AG04449 (cell line): ENCODE measurements at regions of chr5 and their contacts with region 1.

Region 1: DNA sequence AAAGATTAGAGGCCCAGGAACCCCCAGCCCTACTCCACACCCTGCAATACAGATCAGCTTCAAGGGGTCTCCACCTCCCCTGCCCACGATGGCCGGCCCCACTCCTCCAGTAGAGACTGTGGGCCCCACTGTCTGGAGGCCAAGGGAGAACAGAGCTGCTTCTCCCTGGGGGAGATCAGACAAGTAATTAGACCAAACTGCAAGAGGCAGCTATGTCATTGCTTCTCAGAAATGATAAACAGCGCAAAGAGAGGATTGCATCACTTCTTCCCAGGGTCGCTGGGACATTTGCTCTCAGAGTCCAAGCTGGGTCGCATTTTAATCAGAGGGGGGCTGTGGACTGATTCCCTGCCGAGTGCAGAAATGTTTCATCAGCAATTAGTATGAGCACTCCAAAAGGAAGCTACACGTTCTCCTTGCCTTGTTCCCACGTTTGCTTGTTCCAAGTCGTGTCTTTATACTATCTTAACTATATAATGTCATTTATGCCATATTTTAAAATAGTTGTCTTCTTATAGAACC is 59.9 kb downstream of the ROPN1L start:
- DNase-seq: no peak
- H3K4me3 ChIP-seq: no peak overlapping the region
- CTCF ChIP-seq: no peak

Region 2: DNA sequence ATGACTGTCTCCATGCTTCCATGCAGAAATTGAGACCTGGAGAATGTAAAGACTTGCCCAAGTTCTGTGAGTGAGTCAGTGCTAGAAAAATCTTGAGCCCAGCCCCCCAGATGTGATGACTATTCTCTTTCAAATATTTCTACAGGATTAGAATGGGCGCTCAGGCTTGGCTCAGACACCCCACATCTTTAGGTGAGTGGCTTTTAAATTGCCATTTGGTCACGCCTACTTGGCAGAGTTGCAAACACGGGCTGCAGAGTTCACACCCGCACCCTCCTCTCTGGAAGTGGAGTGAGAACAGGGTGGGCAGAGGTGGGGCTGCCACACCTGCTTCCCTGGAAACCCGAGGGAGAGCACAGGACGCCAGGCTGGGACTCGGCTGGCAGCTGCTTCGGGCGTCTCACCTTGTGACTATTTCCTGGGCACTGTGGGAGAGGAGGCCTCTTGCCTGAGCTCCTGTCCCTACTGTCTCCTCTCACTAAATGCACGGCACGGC is 22.3 kb before region 1 on chr5:
- CTCF ChIA-PET with region 1: no interaction called
- POLR2A ChIA-PET with region 1: no interaction called
- DNase-seq: no peak
- H3K4me3 ChIP-seq: no peak overlapping the region
- CTCF ChIP-seq: no peak

Region 3: DNA sequence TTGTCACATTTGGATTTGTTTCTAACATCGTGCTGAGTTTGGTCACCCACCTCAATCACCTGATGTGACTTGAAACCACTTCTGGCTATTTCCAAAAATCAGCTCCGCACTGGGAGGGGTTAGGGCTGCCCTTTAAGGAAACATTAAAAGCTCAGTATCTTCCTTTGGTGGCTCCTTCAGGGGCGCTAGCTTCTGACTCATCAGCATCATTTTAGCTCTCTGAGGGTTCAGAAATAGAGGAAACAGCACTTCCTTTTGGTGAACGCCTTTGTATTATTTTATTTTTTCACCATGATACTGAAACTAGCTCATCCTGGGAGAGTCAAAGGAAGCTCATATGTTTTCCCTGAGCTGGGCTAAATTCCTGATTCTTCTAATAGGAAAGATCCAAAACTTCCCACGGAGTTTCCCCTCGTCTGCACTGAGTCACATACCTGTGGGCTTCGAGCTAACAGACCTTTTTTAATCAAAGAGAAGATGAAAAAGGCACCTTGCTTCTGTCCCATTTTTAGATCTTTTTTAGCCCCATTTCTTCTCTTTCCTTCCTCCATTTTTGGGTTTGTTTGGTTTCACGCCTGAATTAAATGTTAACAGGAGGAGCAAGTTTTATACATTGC is 11.7 kb before region 1 on chr5:
- CTCF ChIA-PET with region 1: interaction called, 21 read pairs
- POLR2A ChIA-PET with region 1: no interaction called
- DNase-seq: no peak
- H3K4me3 ChIP-seq: no peak overlapping the region
- CTCF ChIP-seq: no peak